ENCODE measurements at regions of chr3 and their contacts with region 1.

Region 1: GRCh38 chr3:23999012-23999641 is 54.0 kb downstream of the NR1D2 start:
- DNase-seq: peak; percentile 46
- CTCF ChIP-seq: peak; percentile 94

Region 2: GRCh38 chr3:23071758-23072157 is 927.4 kb before region 1 on chr3:
- CTCF ChIA-PET with region 1: no interaction called
- POLR2A ChIA-PET with region 1: no interaction called
- DNase-seq: peak; percentile 50
- CTCF ChIP-seq: no peak

Region 3: GRCh38 chr3:23389089-23389488 is 610.0 kb before region 1 on chr3:
- CTCF ChIA-PET with region 1: no interaction called
- POLR2A ChIA-PET with region 1: no interaction called
- DNase-seq: no peak
- CTCF ChIP-seq: no peak

Region 4: GRCh38 chr3:23740517-23740965 is 258.6 kb before region 1 on chr3:
- CTCF ChIA-PET with region 1: no interaction called
- POLR2A ChIA-PET with region 1: no interaction called
- DNase-seq: peak; percentile 63
- CTCF ChIP-seq: no peak

Region 5: DNA sequence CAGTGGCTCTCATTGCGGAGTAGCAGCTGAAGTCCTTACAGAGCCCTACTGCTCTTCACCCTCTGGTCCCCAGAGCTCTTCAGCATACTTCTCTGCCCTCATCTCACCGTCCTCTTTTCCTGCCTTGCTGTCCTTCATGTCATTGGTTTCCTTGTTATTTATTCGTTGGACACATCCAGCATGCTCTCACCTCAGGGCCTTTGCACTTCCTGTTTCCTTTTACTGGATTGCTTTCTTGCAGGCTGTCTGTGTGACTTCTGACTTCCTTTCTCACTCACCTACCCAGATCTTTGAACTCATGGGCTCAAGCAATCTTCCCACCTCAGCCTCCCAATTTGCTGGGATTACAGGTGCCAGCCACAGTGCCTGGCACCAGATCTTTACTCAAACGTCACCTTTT is 73.1 kb after region 1 on chr3:
- CTCF ChIA-PET with region 1: no interaction called
- POLR2A ChIA-PET with region 1: no interaction called
- DNase-seq: no peak
- CTCF ChIP-seq: no peak

Region 6: DNA sequence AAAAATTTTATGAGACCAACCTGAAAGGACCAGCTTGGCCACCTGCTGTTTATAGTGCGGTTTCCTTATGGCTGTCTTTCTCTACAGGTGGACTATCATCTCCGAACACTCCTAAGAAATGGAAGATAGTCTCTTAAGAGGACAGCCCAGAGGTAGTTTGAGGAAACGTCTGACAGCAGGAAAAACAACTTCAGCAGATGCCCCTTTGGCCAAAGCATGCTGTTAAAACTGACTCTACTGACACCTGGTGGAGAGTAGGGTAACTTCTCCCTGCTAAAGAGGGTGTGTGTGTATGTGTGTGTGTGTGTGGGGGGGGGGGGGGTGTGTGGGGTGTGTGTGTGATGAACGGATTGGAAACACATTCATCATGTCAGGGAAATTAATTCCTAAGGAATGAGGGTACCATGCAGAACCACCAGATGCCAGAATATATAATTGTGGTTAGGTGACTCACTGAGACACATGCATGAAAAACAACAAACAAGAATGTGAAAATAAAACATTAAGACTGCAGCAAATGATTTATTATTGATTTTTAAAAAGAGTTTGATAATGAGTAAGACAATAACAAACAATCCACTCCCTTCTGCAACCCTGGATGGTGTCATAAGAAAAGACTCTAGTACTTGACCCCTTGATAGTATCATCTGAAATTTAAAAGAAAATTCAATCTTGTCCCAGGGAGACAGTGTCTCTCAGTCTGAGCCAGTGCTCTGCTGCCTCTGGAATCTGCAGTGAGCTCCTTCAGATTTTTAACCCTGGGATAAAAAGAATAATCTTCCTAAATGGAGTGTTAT is 239.0 kb after region 1 on chr3:
- CTCF ChIA-PET with region 1: interaction called, 12 read pairs
- POLR2A ChIA-PET with region 1: no interaction called
- DNase-seq: peak; percentile 43
- CTCF ChIP-seq: peak; percentile 72